AG04450 (cell line): ENCODE measurements at regions of chr4 and their contacts with region 1.

Region 1: DNA sequence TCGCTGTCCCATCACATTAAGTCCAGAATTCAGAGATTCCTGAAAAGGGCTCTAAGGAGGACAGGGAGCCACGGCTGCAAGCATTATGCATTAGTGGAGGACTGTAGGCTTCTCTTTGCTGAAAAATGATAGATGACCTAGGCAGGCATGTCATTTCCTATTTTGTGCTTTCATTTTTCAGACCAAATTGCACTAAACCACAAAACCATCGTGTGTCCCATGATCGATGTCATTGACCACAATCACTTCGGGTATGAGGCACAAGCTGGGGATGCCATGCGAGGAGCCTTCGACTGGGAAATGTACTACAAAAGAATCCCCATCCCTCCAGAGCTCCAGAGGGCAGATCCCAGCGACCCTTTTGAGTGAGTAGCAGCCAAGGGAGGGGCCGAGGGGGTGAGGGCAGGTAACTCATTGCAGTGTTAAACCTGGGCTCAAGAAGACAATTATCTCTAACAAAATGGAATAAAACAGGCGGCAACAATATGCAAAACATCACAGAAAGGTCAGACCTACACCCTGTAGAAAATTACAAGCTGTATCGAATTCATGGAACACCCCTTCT is 355.2 kb upstream of the GALNT7 start:
- DNase-seq: no peak
- H3K4me3 ChIP-seq: no peak overlapping the region
- H3K27ac ChIP-seq: no peak overlapping the region
- H3K27me3 ChIP-seq: no peaks in the 10 kb centered on the region
- CTCF ChIP-seq: no peak

Region 2: DNA sequence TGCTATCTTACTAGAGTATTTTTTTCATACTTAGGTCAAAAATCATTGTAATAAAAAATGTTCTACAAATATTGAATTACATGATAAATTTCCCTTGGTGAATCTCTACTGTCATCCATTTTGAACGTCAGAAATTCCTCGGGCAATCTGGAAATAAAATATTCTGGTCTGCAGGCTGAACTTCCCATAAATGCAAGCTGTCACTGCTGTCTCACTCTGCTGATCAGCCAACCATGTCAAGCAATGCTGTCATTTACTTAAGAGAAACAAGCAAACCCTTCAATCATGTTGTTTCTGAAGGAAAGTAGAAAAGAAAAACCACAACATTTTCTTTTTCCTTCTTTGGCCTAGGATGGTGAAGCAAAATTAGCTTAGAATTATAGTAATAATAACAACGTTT is 159.0 kb before region 1 on chr4:
- CTCF ChIA-PET with region 1: no interaction called
- POLR2A ChIA-PET with region 1: interaction called, 11 read pairs
- DNase-seq: no peak
- H3K4me3 ChIP-seq: no peak overlapping the region
- H3K27ac ChIP-seq: no peak overlapping the region
- H3K27me3 ChIP-seq: no peaks in the 10 kb centered on the region
- CTCF ChIP-seq: no peak